A549 (cell line): ENCODE measurements at regions of chr17 and their contacts with region 1.

Region 1: GRCh38 chr17:10646392-10646990 is 10.6 kb downstream of the MYH3 start:
- DNase-seq: peak; percentile 55 to 74
- ATAC-seq: peak; percentile 85 to 91
- H3K4me3 ChIP-seq: no peak overlapping the region
- H3K27ac ChIP-seq: no peak overlapping the region
- H3K4me1 ChIP-seq: no peaks in the 10 kb centered on the region
- CTCF ChIP-seq: peak; percentile 83
- EP300 ChIP-seq: no peak
- POLR2A ChIP-seq: no peak
- RAD21 ChIP-seq: peak; percentile 69 to 71

Region 2: DNA sequence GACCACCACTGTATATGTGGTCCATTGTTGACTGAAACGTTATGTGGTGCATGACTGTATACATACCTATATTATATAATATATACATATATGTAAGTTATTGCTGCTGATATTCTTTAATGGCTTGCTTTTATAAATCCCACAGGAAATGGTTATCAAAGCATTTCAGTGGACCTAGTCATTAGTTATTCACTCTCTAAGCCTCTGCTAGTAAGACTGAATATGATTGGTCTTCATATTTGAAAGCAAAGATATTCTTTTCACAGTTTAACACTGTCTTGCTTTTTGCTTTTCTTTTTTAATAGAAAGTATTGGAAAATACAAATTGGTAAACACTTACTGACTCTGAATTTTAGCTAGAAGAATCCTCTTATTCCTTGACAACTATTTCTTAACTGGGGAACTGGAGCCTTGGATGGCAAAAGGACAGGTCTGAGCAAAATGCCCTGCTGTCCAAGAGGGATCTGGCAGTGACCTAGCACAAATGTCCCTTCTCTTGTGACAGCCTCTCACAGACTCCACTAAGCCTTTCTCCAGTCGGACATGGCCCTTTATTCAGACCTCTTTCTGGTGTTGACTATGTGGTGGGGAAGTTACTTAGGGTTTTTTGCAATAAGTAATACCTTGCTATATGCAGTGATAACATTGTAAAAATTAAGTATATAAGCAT is 82.4 kb before region 1 on chr17:
- CTCF ChIA-PET with region 1: no interaction called
- POLR2A ChIA-PET with region 1: no interaction called
- DNase-seq: no peak
- ATAC-seq: no peak
- H3K4me3 ChIP-seq: no peak overlapping the region
- H3K27ac ChIP-seq: no peak overlapping the region
- H3K4me1 ChIP-seq: no peaks in the 10 kb centered on the region
- CTCF ChIP-seq: no peak
- EP300 ChIP-seq: no peak
- POLR2A ChIP-seq: no peak
- RAD21 ChIP-seq: no peak

Region 3: DNA sequence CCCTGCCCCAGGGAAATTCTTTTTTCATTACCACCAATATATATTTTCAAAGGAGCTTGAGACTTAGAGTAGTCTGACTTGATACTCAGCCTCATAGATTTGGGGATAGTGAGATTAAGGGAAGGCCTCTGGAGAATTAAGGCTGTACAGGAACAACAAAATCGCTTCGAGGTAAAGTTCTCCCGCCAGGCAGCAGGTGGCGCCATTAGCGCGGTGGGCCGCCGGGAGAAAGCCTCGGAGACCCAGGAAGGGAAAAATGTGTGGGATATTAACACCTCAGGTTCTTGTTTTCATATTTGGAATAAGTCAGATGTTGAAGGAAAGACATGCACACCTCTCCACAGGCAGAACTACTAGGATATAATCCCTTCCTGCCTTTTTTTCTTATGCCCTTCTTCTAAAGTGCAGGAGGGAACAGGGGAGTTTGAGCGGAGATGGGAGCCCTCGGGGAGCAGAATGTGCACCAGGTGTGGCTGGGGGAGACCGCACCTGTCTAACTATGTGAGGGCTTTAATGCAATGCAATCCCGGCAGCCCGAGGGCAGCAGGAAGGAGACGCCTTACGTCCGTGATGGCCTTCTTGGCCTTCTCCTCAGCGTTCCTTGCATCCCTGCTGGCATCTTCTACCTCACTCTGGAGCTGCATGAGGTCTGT is 15.3 kb before region 1 on chr17:
- CTCF ChIA-PET with region 1: interaction called, 194 read pairs
- POLR2A ChIA-PET with region 1: no interaction called
- DNase-seq: peak; percentile 43 to 44
- ATAC-seq: peak; percentile 63 to 91; a peak in 3 of 6 replicates
- H3K4me3 ChIP-seq: no peak overlapping the region
- H3K27ac ChIP-seq: no peak overlapping the region
- H3K4me1 ChIP-seq: no peaks in the 10 kb centered on the region
- CTCF ChIP-seq: peak; percentile 79
- EP300 ChIP-seq: no peak
- POLR2A ChIP-seq: no peak
- RAD21 ChIP-seq: peak; percentile 40 to 60; a peak in 3 of 5 replicates

Region 4: DNA sequence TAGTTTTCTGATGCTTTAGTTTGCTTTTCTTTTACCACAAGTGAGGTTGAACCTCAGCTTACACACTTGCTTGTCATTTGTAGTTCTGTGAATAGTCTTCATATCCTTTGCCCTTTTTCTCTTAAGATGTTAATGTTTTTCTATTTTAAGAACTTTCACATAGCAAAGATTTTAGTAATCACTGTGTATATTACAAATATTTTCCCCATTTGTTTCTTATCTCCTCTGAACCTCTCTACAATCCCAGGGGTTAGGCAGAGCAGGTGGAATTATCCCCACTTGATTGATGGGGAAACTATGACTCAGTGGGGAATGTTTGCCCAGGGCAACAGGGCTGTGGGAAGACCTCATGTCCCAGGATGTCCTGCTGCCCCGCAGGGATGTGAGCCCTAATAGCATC is 22.3 kb after region 1 on chr17:
- CTCF ChIA-PET with region 1: interaction called, 37 read pairs
- POLR2A ChIA-PET with region 1: no interaction called
- DNase-seq: peak in 1 of 2 experiments; percentile 17
- ATAC-seq: peak in 1 of 2 experiments; percentile 54; a peak in 2 of 6 replicates
- H3K4me3 ChIP-seq: no peak overlapping the region
- H3K27ac ChIP-seq: no peak overlapping the region
- H3K4me1 ChIP-seq: no peaks in the 10 kb centered on the region
- CTCF ChIP-seq: no peak
- EP300 ChIP-seq: no peak
- POLR2A ChIP-seq: no peak
- RAD21 ChIP-seq: no peak

Region 5: DNA sequence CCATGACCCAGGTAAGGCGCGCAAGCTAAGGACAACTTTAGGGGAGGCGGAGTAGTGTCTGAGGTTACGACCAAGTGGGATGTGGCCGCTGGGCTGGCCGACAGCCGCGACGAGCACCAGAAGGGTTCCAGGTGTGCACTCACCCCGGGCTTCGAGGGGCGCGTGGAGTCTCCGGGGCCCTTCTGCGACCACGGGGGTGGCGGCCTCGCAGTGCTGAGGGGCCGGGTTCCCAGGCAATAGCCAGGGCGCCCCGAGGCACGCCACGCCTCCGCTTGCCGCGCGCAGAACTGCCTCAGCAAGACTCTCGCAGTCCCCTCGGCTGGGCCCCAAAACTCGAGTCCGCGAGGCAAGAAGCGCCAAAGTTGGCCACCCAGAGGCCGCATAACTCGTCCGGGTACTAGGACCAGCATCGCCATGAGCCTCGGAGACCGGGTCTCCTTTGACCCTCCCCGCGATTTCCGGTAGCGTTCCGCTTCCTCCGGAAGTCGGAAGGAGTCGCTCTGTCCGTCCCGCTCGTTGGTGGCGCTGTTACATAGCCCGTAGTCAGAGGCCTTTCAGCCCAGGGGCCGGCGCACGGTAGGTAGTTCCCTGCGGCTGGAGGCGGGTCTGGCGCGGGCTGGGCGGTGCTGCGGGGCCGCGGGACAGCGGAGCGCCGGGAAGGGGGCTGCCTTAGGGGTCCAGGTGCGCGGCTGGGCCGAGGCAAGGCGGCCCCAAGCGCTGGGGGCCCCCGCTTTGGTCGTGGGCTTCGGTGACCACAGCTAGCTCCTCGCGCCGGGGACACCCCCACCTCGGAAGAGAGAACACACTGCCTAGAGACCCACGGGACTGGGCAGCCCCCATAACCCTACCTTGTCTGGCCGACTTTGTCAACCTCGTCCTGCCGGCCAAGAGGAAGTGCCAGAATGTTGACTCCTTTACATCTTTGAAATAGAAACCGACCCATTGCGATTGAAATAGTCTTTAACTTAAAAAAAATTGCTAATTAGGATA is 50.9 kb after region 1 on chr17 and contains the starts of genes ADPRM and SCO1:
- CTCF ChIA-PET with region 1: interaction called, 18 read pairs
- POLR2A ChIA-PET with region 1: no interaction called
- DNase-seq: peak; percentile 88 to 95
- ATAC-seq: peak; percentile 99 to 100
- H3K4me3 ChIP-seq: peak within 1 kb of the TSS; percentile 85
- H3K27ac ChIP-seq: peak within 1 kb of the TSS; percentile 85 to 99
- H3K4me1 ChIP-seq: peaks cover 15% of the 10 kb centered on the region
- CTCF ChIP-seq: peak; percentile 16; the same call in 1 of the 3 replicates
- EP300 ChIP-seq: no peak
- POLR2A ChIP-seq: peak; percentile 78
- RAD21 ChIP-seq: 0 out of 5 replicates have a peak, but pooled peaks of 1 of the 2 experiments have one; percentile 23
- polyA plus RNA-seq, gene ADPRM: 24.3 and 25.2 TPM in 2 replicates
- polyA plus RNA-seq, gene SCO1: 43.1 and 55.8 TPM in 2 replicates

Region 6: GRCh38 chr17:11935734-11936406 is 1289.4 kb after region 1 on chr17:
- CTCF ChIA-PET with region 1: interaction called, 11 read pairs
- POLR2A ChIA-PET with region 1: no interaction called
- DNase-seq: peak in 1 of 2 experiments; percentile 72
- ATAC-seq: peak; percentile 49 to 65; a peak in 3 of 6 replicates
- H3K4me3 ChIP-seq: no peak overlapping the region
- H3K27ac ChIP-seq: no peak overlapping the region
- H3K4me1 ChIP-seq: no peaks in the 10 kb centered on the region
- CTCF ChIP-seq: peak; percentile 94
- EP300 ChIP-seq: no peak
- POLR2A ChIP-seq: no peak
- RAD21 ChIP-seq: peak; percentile 84 to 95